PC-3 (cell line): ENCODE measurements at regions of chr1 and their contacts with region 1.

Region 1: DNA sequence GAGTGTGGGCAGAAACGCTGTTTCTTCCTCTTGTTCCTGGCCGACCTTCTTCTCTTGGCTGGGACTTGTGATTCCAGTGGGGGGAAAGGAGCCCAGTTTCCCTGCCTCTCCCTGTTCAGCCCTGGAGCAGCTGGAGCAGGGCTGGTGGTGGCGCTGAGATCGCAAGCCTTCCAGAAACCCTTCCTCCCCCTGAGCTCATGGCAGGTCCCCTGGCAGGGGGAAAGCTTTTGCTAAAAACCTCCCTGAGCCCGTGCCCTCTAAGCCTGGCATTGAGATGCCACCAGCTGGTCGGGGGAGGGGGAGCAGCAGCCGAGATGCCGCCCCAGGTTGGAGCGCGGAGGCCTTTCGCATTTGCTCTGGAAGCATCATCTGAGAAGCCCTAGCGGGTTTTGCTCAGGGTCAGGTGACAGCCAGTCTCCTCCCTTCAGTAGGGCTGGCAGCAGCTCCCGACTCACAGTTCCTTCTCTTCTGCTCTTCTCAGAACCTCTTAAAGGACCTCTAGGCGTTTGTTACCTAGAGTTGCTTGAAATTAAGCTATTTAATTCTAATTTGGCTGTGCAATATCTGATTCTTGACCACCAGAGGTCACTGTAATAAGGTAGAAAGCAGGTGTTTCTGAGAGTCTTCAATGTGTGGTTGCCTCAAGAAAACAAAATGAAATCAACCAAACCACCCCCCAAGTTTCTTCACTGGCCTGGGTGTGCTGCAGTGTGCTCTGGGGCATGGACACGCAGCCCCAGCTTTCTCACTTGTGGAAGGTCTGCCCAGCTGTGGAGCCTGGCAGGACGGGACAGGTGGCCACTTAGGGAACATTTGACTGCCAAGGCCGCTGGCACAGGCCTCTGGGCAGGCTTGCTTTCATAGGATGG is 257.3 kb downstream of the CAMTA1 start:
- DNase-seq: peak; percentile 58
- ATAC-seq: peak; percentile 49
- H3K4me3 ChIP-seq: no peak overlapping the region
- H3K27ac ChIP-seq: no peak overlapping the region
- H3K4me1 ChIP-seq: peaks cover 2% of the 10 kb centered on the region; the same call in 1 of the 2 replicates
- H3K27me3 ChIP-seq: peaks cover 42% of the 10 kb centered on the region
- CTCF ChIP-seq: peak; percentile 74

Region 2: GRCh38 chr1:6148497-6149241 is 893.9 kb before region 1 on chr1:
- CTCF ChIA-PET with region 1: no interaction called
- POLR2A ChIA-PET with region 1: no interaction called
- intact Hi-C with region 1: no loop called
- DNase-seq: peak; percentile 42
- ATAC-seq: peak; percentile 73
- H3K4me3 ChIP-seq: no peak overlapping the region
- H3K27ac ChIP-seq: no peak overlapping the region
- H3K4me1 ChIP-seq: peaks cover 16% of the 10 kb centered on the region
- H3K27me3 ChIP-seq: no peaks in the 10 kb centered on the region
- CTCF ChIP-seq: no peak

Region 3: GRCh38 chr1:6922096-6922931 is 120.2 kb before region 1 on chr1:
- CTCF ChIA-PET with region 1: no interaction called
- POLR2A ChIA-PET with region 1: no interaction called
- intact Hi-C with region 1: no loop called
- DNase-seq: no peak
- ATAC-seq: no peak
- H3K4me3 ChIP-seq: no peak overlapping the region
- H3K27ac ChIP-seq: no peak overlapping the region
- H3K4me1 ChIP-seq: no peaks in the 10 kb centered on the region
- H3K27me3 ChIP-seq: peaks cover 30% of the 10 kb centered on the region; the same call in 1 of the 2 replicates
- CTCF ChIP-seq: no peak

Region 4: DNA sequence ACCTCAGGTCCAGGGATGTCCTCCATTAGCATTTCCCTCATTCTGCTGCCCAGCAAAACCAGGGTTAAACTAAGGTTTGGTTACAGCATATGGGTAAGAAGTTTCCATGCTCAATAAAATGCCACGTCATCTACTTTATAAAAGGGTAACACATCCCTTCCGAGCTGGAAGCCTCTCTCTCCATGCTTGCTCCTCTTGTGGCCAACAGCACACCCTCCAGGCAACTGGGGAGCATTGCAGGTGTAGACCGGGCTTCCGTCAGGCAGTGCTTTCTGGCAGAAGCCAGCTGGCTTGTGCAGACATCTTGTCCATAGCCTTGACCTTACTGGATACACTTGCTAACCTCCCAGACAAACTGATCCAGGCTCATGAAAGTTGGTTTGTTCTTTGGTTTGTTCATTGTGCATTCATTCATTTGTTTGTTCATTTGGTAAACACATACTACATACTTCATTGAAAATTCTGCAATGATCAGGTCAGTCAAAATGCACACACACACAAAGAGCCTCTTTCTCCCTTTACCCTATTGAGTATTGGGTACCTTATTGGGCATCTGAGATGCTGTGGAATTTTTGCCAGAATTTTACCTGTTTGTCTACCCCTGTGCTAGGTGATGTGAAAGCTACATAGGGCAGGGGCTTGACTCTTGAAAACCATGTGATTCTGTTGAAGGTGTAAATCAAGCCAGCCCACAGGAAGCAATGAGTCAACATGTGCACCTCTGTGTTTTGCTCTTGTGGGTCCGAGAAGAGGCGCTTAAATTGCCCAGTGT is 165.5 kb after region 1 on chr1:
- CTCF ChIA-PET with region 1: interaction called, 14 read pairs
- POLR2A ChIA-PET with region 1: no interaction called
- intact Hi-C with region 1: no loop called
- DNase-seq: peak; percentile 84
- ATAC-seq: peak; percentile 79
- H3K4me3 ChIP-seq: no peak overlapping the region
- H3K27ac ChIP-seq: no peak overlapping the region
- H3K4me1 ChIP-seq: no peaks in the 10 kb centered on the region
- H3K27me3 ChIP-seq: peaks cover 44% of the 10 kb centered on the region
- CTCF ChIP-seq: peak; percentile 86

Region 5: GRCh38 chr1:7646981-7647901 is 604.7 kb after region 1 on chr1:
- CTCF ChIA-PET with region 1: no interaction called
- POLR2A ChIA-PET with region 1: no interaction called
- intact Hi-C with region 1: loop called (anchors 1 kb)
- DNase-seq: peak; percentile 70
- ATAC-seq: peak; percentile 84
- H3K4me3 ChIP-seq: no peak overlapping the region
- H3K27ac ChIP-seq: no peak overlapping the region
- H3K4me1 ChIP-seq: no peaks in the 10 kb centered on the region
- H3K27me3 ChIP-seq: peaks cover 21% of the 10 kb centered on the region
- CTCF ChIP-seq: peak; percentile 92